ENCODE measurements at regions of chr11 and their contacts with region 1.

Region 1: GRCh38 chr11:72924568-72925190 is 110.5 kb downstream of the ATG16L2 start:
- DNase-seq: no peak
- H3K4me3 ChIP-seq: no peak overlapping the region
- H3K27ac ChIP-seq: peak overlapping the region in 1 of 2 donors; percentile 36
- H3K4me1 ChIP-seq: peaks cover 0 to 59% (median 2%) of the 10 kb centered on the region in 4 donors
- H3K27me3 ChIP-seq: no peaks in the 10 kb centered on the region
- CTCF ChIP-seq: peak; percentile 40 to 57

Region 2: DNA sequence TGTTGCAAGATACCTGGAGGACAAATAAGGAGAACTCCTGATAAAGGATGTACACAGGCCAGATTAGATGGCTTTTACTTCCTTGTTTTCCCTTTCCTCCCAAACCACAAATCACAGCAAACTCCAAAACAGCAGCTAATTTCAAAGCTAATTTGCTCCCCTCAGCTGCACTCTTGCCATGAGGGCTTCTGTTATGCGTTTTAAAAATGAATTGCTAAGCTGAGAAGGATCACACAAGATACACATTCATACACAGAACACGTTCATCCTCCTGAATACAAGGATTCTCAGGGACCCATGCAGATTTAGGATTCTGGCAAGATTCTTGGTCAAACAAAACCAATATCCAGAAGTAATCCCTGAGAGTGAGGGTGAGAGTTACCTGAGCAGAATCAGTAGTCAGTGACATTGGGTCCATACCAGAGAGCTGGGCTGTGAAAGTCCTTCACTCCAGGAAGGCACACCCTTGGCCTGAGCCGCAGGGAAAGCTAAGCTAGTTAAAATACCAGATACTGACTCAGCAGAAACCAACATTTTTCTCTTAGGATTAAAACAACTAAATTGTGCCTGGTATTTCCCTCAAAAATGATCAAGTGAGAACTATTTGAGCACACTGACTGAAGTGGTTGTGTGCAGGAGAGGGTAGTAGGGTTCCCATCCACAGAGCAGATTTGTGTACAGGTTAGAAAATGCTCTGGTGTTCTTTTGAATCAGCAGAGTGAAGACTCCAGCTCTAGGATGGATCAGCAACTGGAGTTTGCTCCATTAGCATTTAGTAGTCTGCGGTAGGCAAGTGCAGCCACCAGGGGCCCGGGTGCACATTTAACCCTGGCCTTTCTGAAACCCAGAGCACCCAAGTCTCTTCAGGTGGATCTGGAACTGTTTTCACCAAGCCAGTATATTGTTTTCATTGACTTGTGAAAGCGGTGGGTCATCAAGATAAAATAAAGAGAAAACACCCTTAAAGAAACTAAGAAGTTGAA is 389.8 kb before region 1 on chr11:
- intact Hi-C with region 1: no loop called
- DNase-seq: no peak
- H3K4me3 ChIP-seq: no peak overlapping the region
- H3K27ac ChIP-seq: no peak overlapping the region
- H3K4me1 ChIP-seq: no peaks in the 10 kb centered on the region
- H3K27me3 ChIP-seq: peaks cover 0 to 23% of the 10 kb centered on the region in 2 donors
- CTCF ChIP-seq: no peak

Region 3: DNA sequence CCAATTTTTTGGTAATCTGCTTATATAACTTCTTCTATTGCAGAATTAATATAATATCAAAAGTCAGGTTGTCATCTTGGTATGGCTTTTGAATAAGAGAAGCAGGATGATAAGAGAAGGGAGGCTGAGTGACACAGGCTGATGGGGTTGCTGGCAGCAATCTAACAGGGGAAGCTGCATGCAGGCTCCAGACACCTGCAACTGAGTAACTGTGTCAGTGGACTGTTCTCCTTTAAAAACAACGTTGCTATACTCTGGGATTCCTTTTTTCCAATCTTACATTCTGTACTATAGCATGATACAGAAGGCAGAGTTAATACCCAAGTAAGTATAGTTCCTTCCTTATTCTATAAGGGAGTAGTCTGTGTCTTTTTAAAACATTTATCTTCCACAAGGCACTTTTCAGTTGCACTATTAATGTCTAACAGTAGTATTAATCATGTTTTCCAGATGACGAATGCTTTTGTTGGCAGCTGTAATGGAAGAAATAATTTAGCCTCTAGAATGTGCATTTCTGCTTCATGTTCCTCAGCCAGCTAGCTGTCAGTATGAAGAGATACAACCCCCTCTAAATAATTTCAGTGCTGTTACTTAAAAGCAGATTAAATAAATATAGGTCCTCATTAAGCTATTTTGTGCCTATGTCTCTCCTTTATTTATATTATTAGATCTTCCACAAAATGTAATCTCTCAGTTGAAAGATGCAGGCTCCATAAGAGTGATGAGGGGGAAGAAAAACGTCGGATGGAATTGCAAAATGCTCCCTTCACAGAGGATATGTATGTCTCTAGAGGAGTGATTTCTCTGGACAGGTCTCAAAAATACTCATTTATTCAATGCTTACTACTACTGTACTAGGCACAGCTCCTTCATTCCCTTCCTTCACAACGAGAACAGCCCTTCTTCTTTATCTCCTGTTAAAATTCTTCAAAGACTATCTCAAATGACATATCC is 59.7 kb before region 1 on chr11:
- intact Hi-C with region 1: loop called (anchors 10 kb)
- DNase-seq: no peak
- H3K4me3 ChIP-seq: no peak overlapping the region
- H3K27ac ChIP-seq: peak overlapping the region; percentile 23 to 64
- H3K4me1 ChIP-seq: peaks cover 0 to 78% (median 28%) of the 10 kb centered on the region in 4 donors
- H3K27me3 ChIP-seq: no peaks in the 10 kb centered on the region
- CTCF ChIP-seq: no peak

Region 4: GRCh38 chr11:73139476-73140198 is 215.0 kb after region 1 on chr11:
- intact Hi-C with region 1: loop called (anchors 10 kb)
- DNase-seq: no peak
- H3K4me3 ChIP-seq: peak overlapping the region; percentile 79 to 83
- H3K27ac ChIP-seq: peak overlapping the region; percentile 94
- H3K4me1 ChIP-seq: peaks cover 0 to 65% (median 31%) of the 10 kb centered on the region in 4 donors
- H3K27me3 ChIP-seq: no peaks in the 10 kb centered on the region
- CTCF ChIP-seq: no peak